IMR-90 (cell line): ENCODE measurements at regions of chr5 and their contacts with region 1.

Region 1: DNA sequence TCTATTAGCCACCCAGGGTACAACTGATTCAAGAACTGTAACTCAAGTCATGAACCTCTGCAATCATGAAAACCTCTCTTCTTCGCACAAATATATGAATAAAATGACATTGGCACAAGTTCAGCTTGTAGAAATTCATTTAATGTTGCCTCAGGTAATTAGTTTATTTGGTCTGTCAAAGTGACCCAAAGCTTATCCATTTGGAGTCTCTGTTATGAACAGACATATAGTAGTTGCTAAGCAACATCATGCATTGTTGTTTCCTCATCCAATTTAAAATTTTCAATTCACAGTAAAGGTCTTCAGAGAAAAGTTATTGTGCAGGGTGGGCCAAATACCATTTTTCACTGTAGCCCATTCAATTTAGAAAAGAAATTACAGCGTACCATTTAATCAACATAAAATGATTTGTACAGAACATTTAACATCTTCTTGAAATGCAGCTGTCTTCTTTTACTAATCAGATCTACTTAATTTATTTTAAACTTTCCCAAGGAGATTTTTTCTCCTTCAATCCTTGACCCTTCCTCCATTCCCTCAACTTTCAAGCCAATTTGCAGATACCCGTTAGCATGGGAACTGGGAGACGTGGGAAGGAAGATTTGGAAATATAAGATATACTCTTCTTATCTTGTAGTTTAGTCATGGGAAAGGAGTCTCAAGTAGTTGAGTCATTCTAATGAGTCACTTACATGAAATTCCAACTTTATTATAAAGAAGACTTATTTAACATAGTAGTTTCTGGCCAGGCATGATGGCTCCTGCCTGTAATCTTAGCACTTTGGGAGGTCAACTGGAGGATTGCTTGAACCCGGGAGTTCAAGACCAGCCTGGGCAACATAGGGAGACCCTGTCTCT is 231.3 kb downstream of the ATPSCKMT start:
- DNase-seq: peak; percentile 96
- ATAC-seq: peak; percentile 89
- H3K4me3 ChIP-seq: no peak overlapping the region
- H3K27ac ChIP-seq: peak overlapping the region; percentile 85
- H3K4me1 ChIP-seq: peaks cover 13% of the 10 kb centered on the region
- H3K27me3 ChIP-seq: no peaks in the 10 kb centered on the region
- CTCF ChIP-seq: no peak
- POLR2A ChIP-seq: no peak
- RAD21 ChIP-seq: no peak

Region 2: DNA sequence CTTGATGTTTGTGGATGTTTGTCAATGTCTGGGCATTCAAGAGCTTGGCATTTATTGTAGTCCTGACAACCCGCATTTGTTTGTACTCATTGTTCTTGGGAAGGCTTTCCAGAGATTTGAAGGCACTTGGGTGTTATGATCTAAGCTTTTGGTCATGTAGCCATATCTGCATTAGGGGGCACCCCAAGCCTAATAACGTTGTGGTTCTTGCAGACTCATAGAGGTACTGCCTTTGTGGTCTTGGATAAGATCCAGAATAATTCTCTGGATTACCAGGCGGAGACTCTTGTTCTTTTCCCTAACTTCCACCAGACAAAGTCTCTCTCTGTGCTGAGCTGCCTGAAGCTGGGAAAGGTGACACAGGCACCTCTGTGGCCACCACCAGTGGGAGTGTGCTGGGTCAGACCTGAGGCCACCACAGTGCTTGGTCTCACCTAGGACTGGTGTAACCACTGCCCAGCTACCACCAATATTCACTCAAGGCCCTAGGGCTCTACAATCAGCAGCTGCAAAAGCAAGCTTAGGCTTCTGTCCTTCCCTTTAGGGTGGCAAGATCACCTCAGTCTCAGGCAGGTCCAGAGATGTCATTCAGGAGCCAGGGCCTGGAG is 243.9 kb before region 1 on chr5:
- CTCF ChIA-PET with region 1: no interaction called
- POLR2A ChIA-PET with region 1: no interaction called
- dilution Hi-C with region 1: no loop called
- in situ Hi-C with region 1: loop called (anchors 10 kb)
- intact Hi-C with region 1: no loop called
- DNase-seq: peak; percentile 84
- ATAC-seq: peak; percentile 44; the same call in 1 of the 2 replicates
- H3K4me3 ChIP-seq: no peak overlapping the region
- H3K27ac ChIP-seq: peak overlapping the region; percentile 61
- H3K4me1 ChIP-seq: peaks cover 8% of the 10 kb centered on the region
- H3K27me3 ChIP-seq: no peaks in the 10 kb centered on the region
- CTCF ChIP-seq: peak; percentile 63
- POLR2A ChIP-seq: no peak
- RAD21 ChIP-seq: peak; percentile 75